ENCODE measurements at regions of chr14 and their contacts with region 1.

Region 1: GRCh38 chr14:20613094-20614037 is 22.2 kb upstream of the RNASE12 start:
- DNase-seq: peak; percentile 43 to 90
- H3K4me3 ChIP-seq: peak overlapping the region; percentile 69 to 70
- H3K27ac ChIP-seq: peak overlapping the region; percentile 82 to 85
- H3K4me1 ChIP-seq: no peaks in the 10 kb centered on the region
- H3K27me3 ChIP-seq: no peaks in the 10 kb centered on the region
- CTCF ChIP-seq: peak; percentile 55 to 87 (median 75)

Region 2: DNA sequence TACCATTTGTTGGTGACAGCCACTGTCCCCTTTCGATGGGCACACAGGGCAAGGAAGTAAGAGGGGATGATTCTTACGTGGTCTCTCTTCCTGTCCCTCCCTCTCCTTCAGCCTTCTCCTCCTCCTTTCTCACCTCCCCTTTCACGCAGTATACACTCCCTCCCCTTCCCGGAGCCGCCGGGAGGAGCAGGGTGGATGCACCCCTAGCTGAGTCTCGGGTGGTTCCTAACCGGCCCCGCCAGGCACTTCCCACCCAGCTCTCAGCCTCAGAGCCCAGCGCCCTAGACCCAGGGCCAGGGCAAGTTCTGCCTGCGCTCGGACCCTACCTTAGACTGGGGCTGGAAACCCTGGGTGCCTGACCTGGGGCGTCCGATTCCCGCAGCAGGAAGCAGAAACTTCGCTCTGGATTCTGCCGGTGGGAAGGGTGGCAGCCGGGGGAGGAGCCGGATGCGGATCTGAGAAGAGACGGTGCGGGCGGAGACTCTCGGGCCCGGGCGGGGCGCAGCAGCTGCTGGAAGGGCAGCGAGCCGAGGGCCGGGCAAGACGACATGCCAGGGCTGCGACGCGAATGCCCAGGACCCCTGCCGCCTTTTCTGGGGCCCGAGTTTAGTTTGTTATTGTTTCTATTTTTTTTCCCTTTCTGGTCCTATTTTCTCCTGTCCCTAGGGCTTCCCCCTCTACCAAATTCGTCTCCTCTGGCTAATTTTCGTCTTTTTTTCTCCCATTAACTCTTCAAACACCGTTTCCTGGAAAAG is 200.1 kb before region 1 on chr14 and contains the start of gene TEP1:
- intact Hi-C with region 1: loop called (anchors 2 kb)
- DNase-seq: peak; percentile 45 to 95
- H3K4me3 ChIP-seq: peak within 1 kb of the TSS; percentile 85 to 88
- H3K27ac ChIP-seq: peak within 1 kb of the TSS; percentile 97 to 98
- H3K4me1 ChIP-seq: peaks cover 0 to 5% of the 10 kb centered on the region in 2 donors
- H3K27me3 ChIP-seq: no peaks in the 10 kb centered on the region
- CTCF ChIP-seq: no peak
- total RNA-seq, gene TEP1: 43.7 TPM

Region 3: DNA sequence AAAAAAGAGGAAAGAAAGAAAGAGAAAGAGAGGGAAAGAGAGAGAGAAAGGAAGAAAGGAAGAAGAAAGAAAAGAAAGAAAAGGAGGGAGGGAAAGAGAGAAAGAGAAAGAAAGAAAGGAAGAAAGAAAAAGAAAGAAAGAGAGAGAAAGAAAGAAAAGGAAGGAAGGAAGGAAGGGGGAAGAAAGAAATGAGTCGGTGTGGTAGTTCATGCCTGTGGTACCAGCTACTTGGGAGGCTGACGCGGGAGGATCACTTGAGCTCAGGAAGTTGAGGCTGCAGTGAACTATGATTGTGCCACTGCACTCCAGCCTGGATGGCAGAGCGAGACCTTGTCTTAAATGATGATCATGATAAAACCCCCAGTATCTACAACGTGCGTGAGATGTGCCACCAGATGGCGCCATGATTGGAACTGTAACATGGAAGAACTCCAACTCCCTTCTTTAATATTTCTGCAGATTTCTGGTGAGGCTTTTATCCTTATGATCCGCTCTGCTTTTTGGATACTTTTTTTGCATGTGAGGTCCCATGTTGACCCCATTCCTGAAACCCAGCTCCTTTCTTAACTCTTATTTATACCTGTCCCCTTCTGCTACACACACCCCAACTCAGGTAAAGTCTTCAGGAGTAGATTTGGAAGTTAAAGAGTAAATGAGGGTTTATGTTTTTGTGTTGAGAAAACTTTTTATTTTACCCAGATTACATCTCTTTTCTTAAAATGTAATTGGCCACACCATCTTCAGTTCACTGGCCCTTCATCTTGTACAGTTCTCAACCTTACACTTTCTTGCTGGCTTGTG is 82.4 kb before region 1 on chr14:
- intact Hi-C with region 1: loop called (anchors 1 kb)
- DNase-seq: peak; percentile 20 to 83
- H3K4me3 ChIP-seq: no peak overlapping the region
- H3K27ac ChIP-seq: no peak overlapping the region
- H3K4me1 ChIP-seq: no peaks in the 10 kb centered on the region
- H3K27me3 ChIP-seq: no peaks in the 10 kb centered on the region
- CTCF ChIP-seq: peak in 2 of 3 experiments; percentile 47 to 67

Region 4: GRCh38 chr14:20632682-20633428 is 19.5 kb after region 1 on chr14:
- intact Hi-C with region 1: loop called (anchors 1 kb)
- DNase-seq: no peak
- H3K4me3 ChIP-seq: peak overlapping the region; percentile 36 to 58
- H3K27ac ChIP-seq: peak overlapping the region in 1 of 2 donors; percentile 44
- H3K4me1 ChIP-seq: peaks cover 4 to 12% of the 10 kb centered on the region in 2 donors
- H3K27me3 ChIP-seq: no peaks in the 10 kb centered on the region
- CTCF ChIP-seq: no peak

Region 5: DNA sequence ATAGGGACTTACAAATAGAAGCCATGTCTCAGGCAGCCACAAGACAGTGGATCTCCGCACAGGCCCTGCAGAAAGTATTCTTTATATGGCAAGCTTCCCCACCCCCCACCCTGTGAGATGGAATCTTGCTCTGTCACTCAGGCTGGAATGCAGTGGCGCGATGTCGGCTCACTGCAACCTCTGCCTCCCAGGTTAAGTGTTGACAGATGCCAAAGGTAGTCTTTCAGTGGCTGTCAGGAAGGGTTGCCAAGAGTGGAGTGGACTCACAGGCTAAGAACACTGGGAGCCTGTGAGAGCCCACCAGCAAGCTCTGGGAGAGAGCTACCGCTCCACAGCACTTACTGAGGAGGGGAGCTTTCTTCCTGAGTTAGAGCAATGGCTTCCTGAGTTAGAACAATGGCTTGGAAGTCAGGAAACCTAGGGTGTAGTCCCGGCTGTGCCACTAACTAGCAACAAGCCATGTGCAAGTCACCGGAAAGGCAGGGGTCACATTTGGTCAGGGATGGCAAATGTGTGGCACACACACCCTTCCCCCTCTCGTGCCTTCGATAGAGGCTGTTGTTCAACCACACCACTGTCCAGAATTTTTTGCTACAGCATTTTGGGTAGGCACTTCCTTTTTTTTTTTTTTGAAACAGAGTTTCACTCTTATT is 186.7 kb after region 1 on chr14:
- intact Hi-C with region 1: no loop called
- DNase-seq: peak in 1 of 2 donors; percentile 70
- H3K4me3 ChIP-seq: peak overlapping the region in 1 of 2 donors; percentile 31
- H3K27ac ChIP-seq: peak overlapping the region in 1 of 2 donors; percentile 42
- H3K4me1 ChIP-seq: no peaks in the 10 kb centered on the region
- H3K27me3 ChIP-seq: no peaks in the 10 kb centered on the region
- CTCF ChIP-seq: no peak

Region 6: GRCh38 chr14:20970983-20971704 is 357.8 kb after region 1 on chr14:
- intact Hi-C with region 1: loop called (anchors 5 kb)
- DNase-seq: peak; percentile 39 to 90
- H3K4me3 ChIP-seq: peak overlapping the region; percentile 58 to 75
- H3K27ac ChIP-seq: peak overlapping the region; percentile 80 to 85
- H3K4me1 ChIP-seq: peaks cover 0 to 5% of the 10 kb centered on the region in 2 donors
- H3K27me3 ChIP-seq: no peaks in the 10 kb centered on the region
- CTCF ChIP-seq: peak; percentile 86 to 93 (median 88)

Region 7: GRCh38 chr14:21024585-21025370 is 411.4 kb after region 1 on chr14 and contains the start of gene NDRG2:
- intact Hi-C with region 1: loop called (anchors 5 kb)
- DNase-seq: peak in 1 of 2 donors; percentile 85
- H3K4me3 ChIP-seq: peak within 1 kb of the TSS; percentile 67 to 93
- H3K27ac ChIP-seq: peak within 1 kb of the TSS; percentile 84 to 88
- H3K4me1 ChIP-seq: peaks cover 6 to 20% of the 10 kb centered on the region in 2 donors
- H3K27me3 ChIP-seq: no peaks in the 10 kb centered on the region
- CTCF ChIP-seq: no peak
- total RNA-seq, gene NDRG2: 216 TPM

Measured in ascending aorta (tissue), 2 donors.